Mammary epithelial cell (primary cell): ENCODE measurements at regions of chr2 and their contacts with region 1.

Region 1: DNA sequence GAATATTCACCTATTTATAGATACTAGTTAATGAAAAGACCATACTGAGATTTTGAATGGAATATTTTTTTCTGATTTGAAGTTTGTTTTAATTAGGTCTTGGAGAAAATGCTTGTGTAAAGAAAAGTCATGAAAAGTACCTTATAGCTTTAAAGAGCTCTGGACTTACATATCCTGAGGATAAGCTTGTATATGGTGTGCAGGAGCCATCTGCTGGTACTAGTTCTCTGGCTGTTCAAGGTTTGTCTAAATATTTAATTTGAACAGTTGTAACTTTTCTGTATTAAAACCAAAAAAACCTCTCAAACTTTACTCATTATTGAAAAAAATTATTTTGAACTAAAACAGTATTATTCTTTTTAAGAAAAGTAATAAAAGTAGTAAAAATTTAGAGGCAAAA is 50.1 kb downstream of the UBR3 start:
- DNase-seq: no peak
- H3K4me3 ChIP-seq: no peak overlapping the region
- H3K27ac ChIP-seq: no peak overlapping the region
- H3K4me1 ChIP-seq: no peaks in the 10 kb centered on the region
- H3K27me3 ChIP-seq: no peaks in the 10 kb centered on the region
- CTCF ChIP-seq: peak; percentile 10 to 46

Region 2: GRCh38 chr2:169452080-169452479 is 425.3 kb before region 1 on chr2:
- CTCF ChIA-PET with region 1: no interaction called
- dilution Hi-C with region 1: no loop called
- in situ Hi-C with region 1: no loop called
- intact Hi-C with region 1: loop called (anchors 5 kb)
- DNase-seq: peak; percentile 5
- H3K4me3 ChIP-seq: no peak overlapping the region
- H3K27ac ChIP-seq: no peak overlapping the region
- H3K4me1 ChIP-seq: no peaks in the 10 kb centered on the region
- H3K27me3 ChIP-seq: no peaks in the 10 kb centered on the region
- CTCF ChIP-seq: peak; percentile 32 to 52

Region 3: GRCh38 chr2:169479257-169480078 is 397.9 kb before region 1 on chr2 and contains the start of gene BBS5:
- CTCF ChIA-PET with region 1: no interaction called
- dilution Hi-C with region 1: no loop called
- in situ Hi-C with region 1: no loop called
- intact Hi-C with region 1: no loop called
- DNase-seq: peak; percentile 73
- H3K4me3 ChIP-seq: peak within 1 kb of the TSS; percentile 38 to 87 (median 69)
- H3K27ac ChIP-seq: peak within 1 kb of the TSS; percentile 33
- H3K4me1 ChIP-seq: peaks cover 5% of the 10 kb centered on the region
- H3K27me3 ChIP-seq: no peaks in the 10 kb centered on the region
- CTCF ChIP-seq: peak; percentile 27 to 66
- total RNA-seq, gene BBS5: 5.9 to 6.2 TPM

Region 4: GRCh38 chr2:169584005-169584877 is 293.2 kb before region 1 on chr2 and contains the start of gene PPIG:
- CTCF ChIA-PET with region 1: no interaction called
- dilution Hi-C with region 1: no loop called
- in situ Hi-C with region 1: no loop called
- intact Hi-C with region 1: no loop called
- DNase-seq: peak; percentile 82
- H3K4me3 ChIP-seq: peak within 1 kb of the TSS; percentile 67 to 95 (median 90)
- H3K27ac ChIP-seq: peak within 1 kb of the TSS; percentile 98
- H3K4me1 ChIP-seq: peaks cover 6% of the 10 kb centered on the region
- H3K27me3 ChIP-seq: no peaks in the 10 kb centered on the region
- CTCF ChIP-seq: no peak
- total RNA-seq, gene PPIG: 22.8 to 49.6 TPM

Region 5: DNA sequence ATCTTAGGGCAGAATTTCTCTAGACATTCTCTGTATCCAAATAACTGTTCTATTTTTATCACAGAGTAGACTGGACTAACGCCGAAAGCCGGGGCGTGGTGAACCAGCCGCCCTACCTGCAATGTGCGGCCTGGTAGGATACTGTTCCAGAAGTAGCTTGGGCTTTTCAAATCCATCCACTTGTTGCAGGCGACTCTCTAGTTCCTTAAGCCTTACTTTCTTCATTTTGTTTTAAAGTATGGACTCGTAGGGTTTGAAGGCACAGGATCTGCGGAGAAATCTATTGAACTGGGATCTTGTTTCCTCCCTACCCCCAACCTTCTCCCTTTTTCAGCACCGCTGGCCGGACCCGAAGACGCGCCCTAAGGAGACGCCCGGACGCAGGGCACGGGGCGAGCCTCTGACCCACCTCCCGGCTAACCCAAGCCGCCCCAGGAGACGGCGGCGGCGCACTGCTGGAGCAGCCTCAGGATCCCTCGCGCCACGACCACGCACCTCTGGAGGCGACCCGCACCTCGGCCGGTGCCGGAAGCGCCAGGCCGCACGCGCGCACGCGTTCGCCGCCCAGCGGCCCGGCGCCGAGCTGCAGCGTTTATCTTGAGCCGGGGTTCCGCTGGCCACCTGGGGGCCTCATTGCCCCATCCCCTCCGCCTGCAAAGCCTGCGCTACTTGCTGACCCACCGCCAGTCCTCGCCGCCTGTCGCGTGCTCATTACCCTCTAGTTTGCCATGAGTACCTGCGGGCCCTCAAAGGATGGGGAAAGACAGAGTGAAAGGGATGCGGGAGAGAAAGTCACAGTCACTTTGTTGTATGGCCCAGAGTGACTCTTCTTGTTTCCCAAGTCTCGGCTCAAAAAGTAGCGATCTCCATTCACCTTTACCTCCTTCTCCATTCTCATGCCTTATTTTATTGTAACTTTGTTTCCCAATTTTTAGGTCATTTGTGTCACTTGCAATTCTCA is 52.7 kb before region 1 on chr2 and contains the start of gene METTL5:
- CTCF ChIA-PET with region 1: interaction called, 6 read pairs
- dilution Hi-C with region 1: no loop called
- in situ Hi-C with region 1: no loop called
- intact Hi-C with region 1: loop called (anchors 1 kb)
- DNase-seq: peak; percentile 73
- H3K4me3 ChIP-seq: peak within 1 kb of the TSS; percentile 76 to 90 (median 78)
- H3K27ac ChIP-seq: peak within 1 kb of the TSS; percentile 76
- H3K4me1 ChIP-seq: peaks cover 21% of the 10 kb centered on the region
- H3K27me3 ChIP-seq: no peaks in the 10 kb centered on the region
- CTCF ChIP-seq: peak; percentile 78 to 82
- total RNA-seq, gene METTL5: 60.2 to 90.6 TPM